Activated CD4-positive, alpha-beta T cell treated with anti-CD3 and anti-CD28 coated beads, Interleukin-2, amount 10 ng/mL, durations not matched to agents 7 days and 5 days (primary cell): ENCODE measurements at regions of chr1 and their contacts with region 1.

Region 1: DNA sequence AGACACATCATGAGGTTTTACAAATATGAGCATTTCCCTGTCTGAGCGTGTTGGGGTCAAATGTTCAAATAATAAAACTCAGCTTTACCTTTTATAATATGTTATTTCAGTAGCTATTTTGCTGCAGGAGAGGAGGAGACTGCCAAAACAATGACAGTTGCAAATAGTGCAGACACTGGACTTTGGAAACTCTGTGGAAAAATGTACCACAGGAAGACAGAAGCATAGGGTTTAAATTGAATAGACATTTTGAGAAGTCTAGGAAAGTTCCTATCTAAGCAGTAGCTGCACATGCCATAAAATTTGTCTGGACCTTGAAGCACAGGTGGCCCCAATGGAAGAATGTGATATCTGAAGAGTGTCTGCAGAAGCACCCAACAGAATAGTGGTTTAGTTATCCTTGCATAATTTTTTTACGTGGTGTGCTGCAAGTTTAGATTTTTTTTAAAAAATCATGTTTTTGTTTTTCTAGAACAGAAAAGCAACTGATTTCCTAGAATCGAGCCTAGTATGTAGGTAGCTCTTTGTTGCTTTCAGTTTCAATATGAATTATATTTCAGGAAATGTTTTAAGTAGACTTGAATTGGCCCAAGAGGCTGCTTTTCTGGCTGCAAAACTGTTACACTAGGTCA is 14.0 kb upstream of the GBP5 start:
- DNase-seq: peak; percentile 50
- H3K4me3 Mint-ChIP-seq: peak overlapping the region; percentile 31
- H3K27ac Mint-ChIP-seq: peak overlapping the region; percentile 95
- H3K4me1 Mint-ChIP-seq: peaks cover 82% of the 10 kb centered on the region
- H3K27me3 Mint-ChIP-seq: no peaks in the 10 kb centered on the region

Region 2: GRCh38 chr1:89198491-89199072 is 88.1 kb before region 1 on chr1 and contains the start of gene GBP4:
- CTCF ChIA-PET with region 1: no interaction called
- POLR2A ChIA-PET with region 1: no interaction called
- DNase-seq: peak; percentile 60
- H3K4me3 Mint-ChIP-seq: peak within 1 kb of the TSS; percentile 90
- H3K27ac Mint-ChIP-seq: peak within 1 kb of the TSS; percentile 95
- H3K4me1 Mint-ChIP-seq: peaks cover 69% of the 10 kb centered on the region
- H3K27me3 Mint-ChIP-seq: no peaks in the 10 kb centered on the region
- total RNA-seq, gene GBP4: 120 to 129 TPM

Region 3: DNA sequence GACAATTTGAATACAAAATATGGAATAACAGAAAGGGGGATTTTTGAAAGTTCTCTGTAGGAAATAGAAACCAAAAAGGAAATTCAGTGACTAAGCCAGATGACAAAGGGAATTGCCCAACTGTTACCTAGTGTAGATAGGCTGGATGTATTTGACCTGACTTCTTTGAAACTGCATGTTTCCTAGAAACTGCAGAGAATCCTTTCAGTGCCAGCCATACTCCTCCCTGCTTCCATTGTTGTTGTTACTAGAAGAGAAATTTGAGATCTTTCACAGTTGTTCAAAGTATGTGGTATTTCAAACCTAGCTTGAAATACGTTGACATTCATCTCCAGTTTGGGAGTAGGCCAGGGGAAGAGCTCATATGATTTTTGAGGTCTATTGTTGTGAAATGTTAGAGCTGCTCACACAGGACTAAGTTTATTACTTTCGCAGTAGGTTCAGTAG is 12.2 kb before region 1 on chr1:
- CTCF ChIA-PET with region 1: interaction called, 13 read pairs
- POLR2A ChIA-PET with region 1: interaction called, 8 read pairs
- DNase-seq: no peak
- H3K4me3 Mint-ChIP-seq: peak overlapping the region; percentile 68
- H3K27ac Mint-ChIP-seq: peak overlapping the region; percentile 95
- H3K4me1 Mint-ChIP-seq: peaks cover 57% of the 10 kb centered on the region
- H3K27me3 Mint-ChIP-seq: no peaks in the 10 kb centered on the region

Region 4: DNA sequence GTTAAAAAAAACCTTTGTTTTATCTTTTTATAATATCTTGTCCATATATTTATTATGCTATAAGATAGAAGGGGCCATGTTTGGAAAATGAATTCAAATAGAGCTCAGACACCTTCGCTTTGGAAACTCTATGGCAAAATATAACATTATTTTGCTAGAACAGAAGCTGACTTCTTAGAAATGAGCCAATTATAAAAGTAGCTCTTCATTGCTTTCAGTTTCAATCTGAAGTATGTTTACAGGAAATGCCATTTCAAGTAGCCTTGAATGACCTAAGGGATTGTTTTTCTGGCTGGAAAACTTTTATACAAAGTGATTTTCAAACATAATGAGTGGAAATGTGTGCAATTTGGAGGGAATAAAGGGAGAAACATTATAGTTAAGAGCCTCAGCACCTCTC is 23.8 kb after region 1 on chr1:
- CTCF ChIA-PET with region 1: interaction called, 10 read pairs
- POLR2A ChIA-PET with region 1: no interaction called
- DNase-seq: no peak
- H3K4me3 Mint-ChIP-seq: peak overlapping the region; percentile 31
- H3K27ac Mint-ChIP-seq: peak overlapping the region; percentile 98
- H3K4me1 Mint-ChIP-seq: peaks cover 59% of the 10 kb centered on the region
- H3K27me3 Mint-ChIP-seq: no peaks in the 10 kb centered on the region

Region 5: GRCh38 chr1:89364954-89365567 is 78.4 kb after region 1 on chr1:
- CTCF ChIA-PET with region 1: no interaction called
- POLR2A ChIA-PET with region 1: no interaction called
- DNase-seq: no peak
- H3K4me3 Mint-ChIP-seq: no peak overlapping the region
- H3K27ac Mint-ChIP-seq: no peak overlapping the region
- H3K4me1 Mint-ChIP-seq: peaks cover 22% of the 10 kb centered on the region
- H3K27me3 Mint-ChIP-seq: peaks cover 9% of the 10 kb centered on the region